CD8-positive, alpha-beta memory T cell (primary cell): ENCODE measurements at regions of chr11 and their contacts with region 1.

Region 1: DNA sequence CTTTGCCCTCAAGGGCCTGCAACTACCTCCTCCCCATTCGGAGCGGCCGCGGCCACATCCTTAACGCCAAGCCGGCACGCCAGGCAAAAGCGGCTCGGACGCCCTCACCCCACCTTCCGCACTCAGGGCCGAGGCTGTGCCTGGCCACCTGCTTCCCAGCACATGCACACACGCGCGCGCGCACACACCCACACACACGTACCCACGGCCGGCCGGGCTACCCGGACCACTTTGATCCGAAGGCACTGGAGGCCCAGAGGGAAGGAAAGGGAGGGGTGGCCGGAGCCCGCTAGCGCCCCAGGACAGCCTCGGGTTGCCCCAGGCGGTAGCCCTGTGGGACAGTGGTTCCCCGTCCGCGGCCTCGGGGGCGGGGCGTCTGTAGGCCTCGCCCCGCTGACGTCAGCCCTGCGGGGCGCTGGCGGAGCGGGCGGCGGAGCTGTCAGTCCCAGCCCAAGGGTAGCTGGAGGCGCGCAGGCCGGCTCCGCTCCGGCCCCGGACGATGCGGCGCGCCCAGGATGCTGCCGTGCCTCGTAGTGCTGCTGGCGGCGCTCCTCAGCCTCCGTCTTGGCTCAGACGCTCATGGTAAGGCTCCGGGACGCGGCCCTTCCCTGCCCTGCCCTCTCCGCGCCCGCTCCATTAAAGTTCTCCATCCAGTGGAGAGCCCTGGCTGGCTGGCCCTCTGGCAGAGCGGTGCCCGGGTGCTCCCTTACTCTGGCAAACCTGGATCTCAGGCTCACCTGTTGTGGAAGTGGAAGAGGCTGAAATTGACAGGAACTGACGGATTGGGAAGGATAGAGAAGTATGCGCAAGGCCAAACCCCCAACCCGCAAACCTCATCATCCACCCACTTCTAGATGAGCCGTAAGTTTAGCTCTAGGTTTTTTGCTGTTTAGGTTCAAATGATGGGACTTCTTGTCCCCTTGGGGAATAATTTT is at the start of gene IL10RA:
- DNase-seq: peak; percentile 78 to 88 (median 82)
- H3K4me3 ChIP-seq: peak within 1 kb of the TSS; percentile 100
- H3K4me3 Mint-ChIP-seq: peak within 1 kb of the TSS; percentile 90 to 97 (median 93)
- H3K27ac ChIP-seq: peak within 1 kb of the TSS; percentile 98
- H3K27ac Mint-ChIP-seq: peak within 1 kb of the TSS; percentile 85 to 99 (median 92)
- H3K4me1 ChIP-seq: peaks cover 63% of the 10 kb centered on the region
- H3K4me1 Mint-ChIP-seq: peaks cover 53 to 71% (median 63%) of the 10 kb centered on the region in 3 donors
- H3K27me3 ChIP-seq: no peaks in the 10 kb centered on the region
- H3K27me3 Mint-ChIP-seq: no peaks in the 10 kb centered on the region
- total RNA-seq, gene IL10RA: 120 to 122 TPM

Region 2: GRCh38 chr11:117972629-117973502 is 13.4 kb before region 1 on chr11:
- CTCF ChIA-PET with region 1: interaction called, 6 read pairs
- POLR2A ChIA-PET with region 1: interaction called, 24 read pairs
- DNase-seq: no peak
- H3K4me3 ChIP-seq: no peak overlapping the region
- H3K4me3 Mint-ChIP-seq: peak overlapping the region; percentile 37 to 62 (median 50)
- H3K27ac ChIP-seq: no peak overlapping the region
- H3K27ac Mint-ChIP-seq: peak overlapping the region; percentile 12 to 96 (median 76)
- H3K4me1 ChIP-seq: peaks cover 77% of the 10 kb centered on the region
- H3K4me1 Mint-ChIP-seq: peaks cover 84 to 93% (median 91%) of the 10 kb centered on the region in 3 donors
- H3K27me3 ChIP-seq: no peaks in the 10 kb centered on the region
- H3K27me3 Mint-ChIP-seq: no peaks in the 10 kb centered on the region

Region 3: GRCh38 chr11:118002541-118003423 is 16.6 kb after region 1 on chr11:
- CTCF ChIA-PET with region 1: interaction called, 75 read pairs
- POLR2A ChIA-PET with region 1: interaction called, 114 read pairs
- DNase-seq: peak in 2 of 5 donors; percentile 37 to 62
- H3K4me3 ChIP-seq: peak overlapping the region; percentile 13
- H3K4me3 Mint-ChIP-seq: peak overlapping the region; percentile 48 to 85 (median 60)
- H3K27ac ChIP-seq: peak overlapping the region; percentile 72
- H3K27ac Mint-ChIP-seq: peak overlapping the region; percentile 88 to 100 (median 94)
- H3K4me1 ChIP-seq: peaks cover 93% of the 10 kb centered on the region
- H3K4me1 Mint-ChIP-seq: peaks cover 94 to 100% (median 98%) of the 10 kb centered on the region in 3 donors
- H3K27me3 ChIP-seq: no peaks in the 10 kb centered on the region
- H3K27me3 Mint-ChIP-seq: no peaks in the 10 kb centered on the region

Region 4: DNA sequence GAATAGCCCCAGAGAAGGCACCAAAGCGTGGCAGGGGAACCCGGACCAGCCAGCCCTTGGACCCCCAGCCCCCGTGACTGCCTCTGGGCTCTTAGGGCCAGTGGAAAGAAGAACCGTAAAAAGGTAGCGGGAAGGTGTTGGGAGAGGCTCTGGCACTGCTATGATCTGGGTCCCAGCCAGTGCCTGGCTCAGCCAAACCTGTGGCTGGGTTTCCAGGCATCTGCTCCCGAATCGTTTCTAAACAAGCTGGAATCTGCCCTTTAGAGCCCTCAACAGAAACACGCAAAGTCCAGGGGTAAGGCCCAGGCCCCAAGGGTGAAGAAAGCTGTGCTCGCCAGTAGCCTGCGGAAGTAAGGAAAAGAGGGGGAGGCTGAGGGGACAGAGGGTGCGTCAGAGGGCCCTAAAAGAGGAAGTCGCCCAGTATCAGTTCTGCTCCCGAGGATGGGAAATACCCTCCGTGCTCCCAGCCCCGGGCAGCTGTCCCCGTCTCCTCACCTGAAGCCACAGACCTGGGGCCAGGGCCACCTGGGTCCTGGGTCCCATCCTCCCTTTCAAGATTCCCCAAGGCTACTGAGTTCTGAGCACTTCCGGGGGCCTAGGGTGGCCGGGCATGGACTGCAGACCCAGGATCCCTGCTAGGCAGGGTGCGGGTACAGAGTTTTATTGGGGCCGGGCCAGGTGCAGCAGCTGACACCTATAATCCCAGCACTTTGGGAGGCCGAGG is 24.7 kb after region 1 on chr11:
- CTCF ChIA-PET with region 1: interaction called, 18 read pairs
- POLR2A ChIA-PET with region 1: interaction called, 38 read pairs
- DNase-seq: no peak
- H3K4me3 ChIP-seq: no peak overlapping the region
- H3K4me3 Mint-ChIP-seq: peak overlapping the region in 1 of 7 donors; percentile 70
- H3K27ac ChIP-seq: no peak overlapping the region
- H3K27ac Mint-ChIP-seq: peak overlapping the region; percentile 69 to 100 (median 91)
- H3K4me1 ChIP-seq: peaks cover 100% of the 10 kb centered on the region
- H3K4me1 Mint-ChIP-seq: peaks cover 98 to 100% (median 100%) of the 10 kb centered on the region in 3 donors
- H3K27me3 ChIP-seq: no peaks in the 10 kb centered on the region
- H3K27me3 Mint-ChIP-seq: no peaks in the 10 kb centered on the region

Region 5: DNA sequence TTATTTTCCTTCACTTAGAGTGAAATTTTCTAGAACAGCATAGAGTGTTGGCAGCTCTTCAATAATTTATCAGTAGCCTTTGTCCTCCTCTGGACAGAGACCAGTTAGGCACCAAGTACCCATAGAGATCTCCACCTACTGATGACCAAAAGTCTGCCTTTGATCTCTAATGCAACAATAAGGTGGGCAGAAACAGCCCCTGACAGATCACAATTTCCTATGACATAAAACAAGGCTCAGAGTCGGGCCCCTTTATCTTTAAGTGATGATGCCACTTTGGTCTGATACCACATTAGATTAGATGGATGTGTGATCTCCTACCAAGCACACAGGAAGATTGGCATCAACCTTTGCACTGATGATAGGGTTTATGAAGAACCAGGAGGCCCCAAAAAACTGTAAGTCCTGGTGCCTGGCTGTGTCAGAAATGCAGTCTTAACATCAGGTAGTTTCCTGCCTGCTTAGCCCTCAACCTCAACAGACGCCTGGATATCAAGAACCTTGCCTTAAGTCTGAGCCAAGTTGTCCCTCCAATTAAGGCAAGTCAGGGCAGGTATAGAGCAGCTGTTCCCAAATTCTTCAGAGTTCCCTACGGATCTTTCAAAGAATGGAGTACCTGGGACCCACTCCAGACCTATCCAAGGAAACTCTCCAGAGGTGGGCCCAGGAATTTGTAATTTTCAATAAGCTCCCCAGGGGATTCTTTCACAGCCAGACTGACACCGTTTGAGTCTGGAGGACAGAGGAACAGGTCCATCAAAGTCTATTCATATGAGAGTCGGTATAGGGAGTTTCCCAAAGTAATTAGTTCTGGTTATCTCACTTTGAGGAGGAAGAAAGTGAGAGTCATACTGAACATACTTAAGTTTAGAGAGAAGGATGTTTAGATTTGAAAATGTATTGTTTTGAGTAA is 60.1 kb after region 1 on chr11:
- CTCF ChIA-PET with region 1: interaction called, 155 read pairs
- POLR2A ChIA-PET with region 1: interaction called, 31 read pairs
- DNase-seq: peak; percentile 19 to 80 (median 73)
- H3K4me3 ChIP-seq: no peak overlapping the region
- H3K4me3 Mint-ChIP-seq: peak overlapping the region; percentile 1 to 78 (median 66)
- H3K27ac ChIP-seq: peak overlapping the region; percentile 9
- H3K27ac Mint-ChIP-seq: peak overlapping the region; percentile 89 to 99 (median 97)
- H3K4me1 ChIP-seq: peaks cover 95% of the 10 kb centered on the region
- H3K4me1 Mint-ChIP-seq: peaks cover 84 to 97% (median 96%) of the 10 kb centered on the region in 3 donors
- H3K27me3 ChIP-seq: no peaks in the 10 kb centered on the region
- H3K27me3 Mint-ChIP-seq: no peaks in the 10 kb centered on the region